ENCODE measurements at regions of chr22 and their contacts with region 1.

Region 1: GRCh38 chr22:33510429-33510904 is 409.8 kb downstream of the LARGE1 start:
- DNase-seq: no peak
- H3K4me3 ChIP-seq: no peak overlapping the region
- H3K27ac ChIP-seq: no peak overlapping the region
- H3K4me1 ChIP-seq: peaks cover 0 to 7% (median 3%) of the 10 kb centered on the region in 4 donors
- H3K27me3 ChIP-seq: no peaks in the 10 kb centered on the region
- CTCF ChIP-seq: no peak
- EP300 ChIP-seq: no peak
- POLR2A ChIP-seq: no peak

Region 2: GRCh38 chr22:33555814-33556522 is 45.5 kb after region 1 on chr22:
- in situ Hi-C with region 1: no loop called
- intact Hi-C with region 1: loop called (anchors 2 kb)
- DNase-seq: no peak
- H3K4me3 ChIP-seq: no peak overlapping the region
- H3K27ac ChIP-seq: no peak overlapping the region
- H3K4me1 ChIP-seq: no peaks in the 10 kb centered on the region
- H3K27me3 ChIP-seq: no peaks in the 10 kb centered on the region
- CTCF ChIP-seq: no peak
- EP300 ChIP-seq: no peak
- POLR2A ChIP-seq: no peak